Breast epithelium (tissue), 4 donors: ENCODE measurements at regions of chr3 and their contacts with region 1.

Region 1: GRCh38 chr3:52372822-52373504 is 56.8 kb downstream of the DNAH1 start:
- DNase-seq: no peak
- H3K4me3 ChIP-seq: peak overlapping the region; percentile 5 to 22 (median 9)
- H3K27ac ChIP-seq: no peak overlapping the region
- H3K4me1 ChIP-seq: no peaks in the 10 kb centered on the region
- H3K27me3 ChIP-seq: no peaks in the 10 kb centered on the region
- CTCF ChIP-seq: no peak
- POLR2A ChIP-seq: no peak

Region 2: GRCh38 chr3:52278510-52279069 is 94.4 kb before region 1 on chr3 and contains the start of gene WDR82:
- intact Hi-C with region 1: no loop called
- DNase-seq: peak; percentile 96 to 98
- H3K4me3 ChIP-seq: peak within 1 kb of the TSS; percentile 83 to 86 (median 85)
- H3K27ac ChIP-seq: peak within 1 kb of the TSS; percentile 94 to 99
- H3K4me1 ChIP-seq: peaks cover 0 to 23% of the 10 kb centered on the region in 2 donors
- H3K27me3 ChIP-seq: no peaks in the 10 kb centered on the region
- CTCF ChIP-seq: peak in 2 of 3 donors; percentile 37 to 52
- POLR2A ChIP-seq: peak; percentile 38
- total RNA-seq, gene WDR82: 49.6 to 53.1 (median 52.1) TPM

Region 3: DNA sequence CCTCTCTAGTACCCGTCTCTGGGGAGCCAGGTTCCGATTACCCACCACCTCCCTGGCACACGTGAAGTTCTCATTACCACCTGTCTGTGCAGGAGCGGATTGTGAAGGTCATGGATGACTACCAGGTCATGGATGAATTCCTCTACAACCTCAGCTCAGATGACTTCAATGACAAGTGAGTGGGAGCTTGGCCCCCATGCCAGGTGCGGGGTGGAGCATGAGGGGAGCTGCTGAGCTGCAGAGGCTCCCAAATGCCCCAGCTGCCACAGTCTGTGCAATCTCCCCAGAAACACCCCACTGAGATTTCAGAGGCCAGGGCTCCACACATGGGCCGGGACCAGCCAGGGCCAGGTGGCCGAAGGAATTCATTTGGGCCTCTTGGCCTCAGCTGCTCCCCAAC is 22.5 kb before region 1 on chr3:
- intact Hi-C with region 1: loop called (anchors 1 kb)
- DNase-seq: no peak
- H3K4me3 ChIP-seq: no peak overlapping the region
- H3K27ac ChIP-seq: no peak overlapping the region
- H3K4me1 ChIP-seq: no peaks in the 10 kb centered on the region
- H3K27me3 ChIP-seq: no peaks in the 10 kb centered on the region
- CTCF ChIP-seq: no peak
- POLR2A ChIP-seq: no peak